K562 (cell line): ENCODE measurements at regions of chr20 and their contacts with region 1.

Region 1: DNA sequence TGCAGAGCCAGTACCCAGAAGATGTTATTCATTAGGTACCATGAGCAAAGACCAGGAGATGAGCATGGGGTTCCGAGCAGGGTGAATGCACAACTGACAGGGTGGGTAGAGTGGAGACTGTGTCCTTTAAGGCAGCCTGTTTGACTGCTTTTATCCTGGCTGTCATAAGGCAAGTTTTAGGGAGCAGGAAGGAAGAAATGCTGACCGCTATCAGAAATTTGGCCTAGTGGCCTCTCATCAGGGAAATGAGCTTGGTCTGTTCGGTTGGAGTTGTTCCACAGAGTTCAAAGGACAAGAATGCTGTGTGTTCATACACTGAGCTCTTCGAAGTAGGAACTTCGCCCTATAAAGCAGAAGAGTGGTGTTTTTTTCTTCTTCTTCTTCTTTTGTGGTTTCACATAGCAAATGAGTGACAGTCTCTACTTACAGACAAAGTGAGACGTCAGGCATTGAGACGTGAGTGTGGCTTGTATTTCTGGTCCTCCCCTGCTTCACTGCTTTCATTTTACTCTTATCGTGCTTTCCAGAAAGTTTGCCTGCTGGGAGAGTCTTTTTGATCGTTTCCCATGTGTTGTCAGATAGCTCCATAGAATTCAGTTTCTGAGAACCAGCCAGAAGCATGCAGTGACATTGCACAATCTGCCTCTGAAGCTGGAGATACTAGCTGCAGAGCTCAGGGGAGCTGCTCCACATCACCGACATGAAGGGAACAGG is at the start of gene CASS4:
- DNase-seq: peak; percentile 81 to 97 (median 85)
- ATAC-seq: peak; percentile 84
- H3K4me3 ChIP-seq: peak within 1 kb of the TSS; percentile 77
- H3K27ac ChIP-seq: peak within 1 kb of the TSS; percentile 85
- H3K4me1 ChIP-seq: peaks cover 9 to 52% of the 10 kb centered on the region in 2 experiments
- H3K27me3 ChIP-seq: no peaks in the 10 kb centered on the region
- CTCF ChIP-seq: no peak
- EP300 ChIP-seq: peak; percentile 99
- POLR2A ChIP-seq: no peak
- RAD21 ChIP-seq: peak in 1 of 2 experiments; percentile 30; a peak in 2 of 4 replicates
- polyA plus RNA-seq, gene CASS4: 8.1 to 8.8 TPM

Region 2: DNA sequence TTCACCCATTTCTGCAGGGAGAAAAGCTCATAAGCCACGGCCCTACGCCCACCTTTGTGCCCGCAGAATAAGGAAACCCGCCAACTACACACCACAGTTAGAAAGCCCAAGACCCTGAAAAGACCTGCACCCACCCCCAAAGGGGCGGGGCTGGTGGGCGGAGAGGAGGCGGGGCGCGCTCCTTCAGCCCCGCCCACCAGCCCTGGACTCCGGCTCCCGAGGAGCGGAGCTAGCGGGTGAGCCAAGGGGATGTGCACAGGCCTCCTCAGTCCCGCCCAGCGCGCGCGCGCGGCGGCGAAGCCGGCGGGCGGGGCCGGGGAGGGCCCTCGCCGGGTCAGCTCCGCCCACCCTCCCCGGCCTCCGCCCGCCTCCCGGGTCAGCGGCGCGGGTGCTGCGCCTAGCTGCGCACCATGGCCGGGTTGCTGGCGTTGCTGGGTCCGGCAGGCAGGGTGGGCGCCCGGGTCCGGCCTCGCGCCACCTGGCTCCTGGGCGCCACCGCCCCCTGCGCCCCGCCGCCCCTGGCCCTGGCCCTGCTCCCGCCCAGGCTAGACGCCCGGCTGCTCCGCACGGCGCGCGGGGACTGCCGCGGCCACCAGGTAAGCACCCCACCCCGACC is 53.2 kb before region 1 on chr20 and contains the start of gene FAM210B:
- CTCF ChIA-PET with region 1: no interaction called
- POLR2A ChIA-PET with region 1: interaction called, 8 read pairs
- in situ Hi-C with region 1: no loop called
- intact Hi-C with region 1: loop called (anchors 2 kb)
- DNase-seq: peak; percentile 94 to 97 (median 96)
- ATAC-seq: peak; percentile 87
- H3K4me3 ChIP-seq: peak within 1 kb of the TSS; percentile 81
- H3K27ac ChIP-seq: peak within 1 kb of the TSS; percentile 81
- H3K4me1 ChIP-seq: peaks cover 34 to 52% of the 10 kb centered on the region in 2 experiments
- H3K27me3 ChIP-seq: no peaks in the 10 kb centered on the region
- CTCF ChIP-seq: no peak
- EP300 ChIP-seq: no peak
- POLR2A ChIP-seq: no peak
- RAD21 ChIP-seq: no peak
- polyA plus RNA-seq, gene FAM210B: 12.1 to 21.4 TPM

Region 3: DNA sequence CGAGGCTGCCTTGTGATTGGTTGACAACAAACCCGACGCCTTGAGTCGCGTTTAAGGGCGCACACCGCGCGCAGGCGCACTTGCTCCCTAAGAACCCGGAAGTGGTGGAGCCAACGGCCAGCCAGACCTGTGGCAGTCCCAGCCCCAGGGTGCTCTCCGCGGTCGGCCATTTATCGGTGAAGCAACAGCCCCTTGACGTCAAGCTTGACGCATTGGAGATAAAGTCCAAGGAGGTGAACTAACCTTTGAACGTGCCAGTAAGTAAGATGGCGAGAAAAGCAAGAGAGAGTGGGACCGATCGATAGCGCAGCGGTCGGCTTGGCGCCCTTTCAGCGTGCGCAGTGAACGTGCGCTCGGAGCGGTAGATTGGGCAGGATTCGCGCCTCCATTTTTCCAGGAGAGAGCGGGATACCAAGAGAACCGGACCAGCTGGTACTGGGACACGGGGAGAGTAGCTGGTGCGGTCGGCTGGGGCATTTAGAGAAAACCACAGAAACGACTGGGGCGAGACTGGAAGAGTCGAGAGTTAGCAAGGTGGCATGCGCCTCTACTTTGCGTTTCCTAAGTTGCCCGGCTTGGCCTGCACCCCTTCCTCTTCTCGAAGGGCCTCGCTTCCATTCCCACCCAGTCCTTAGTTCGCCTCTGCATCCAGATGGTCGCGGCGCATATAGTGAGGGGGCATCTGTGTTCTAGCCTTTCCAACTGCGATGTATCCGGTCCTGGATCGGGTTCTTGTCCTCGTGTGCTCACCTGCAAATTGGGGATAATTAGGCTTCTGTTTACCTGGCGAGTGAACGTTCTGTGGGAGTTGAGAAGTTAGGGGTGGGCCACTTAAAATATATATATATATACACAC is 19.4 kb before region 1 on chr20 and contains the start of gene CSTF1:
- CTCF ChIA-PET with region 1: no interaction called
- POLR2A ChIA-PET with region 1: interaction called, 35 read pairs
- in situ Hi-C with region 1: no loop called
- intact Hi-C with region 1: loop called (anchors 1 kb)
- DNase-seq: peak; percentile 99 to 100 (median 100)
- ATAC-seq: peak; percentile 95
- H3K4me3 ChIP-seq: peak within 1 kb of the TSS; percentile 92
- H3K27ac ChIP-seq: peak within 1 kb of the TSS; percentile 99
- H3K4me1 ChIP-seq: peaks cover 4 to 12% of the 10 kb centered on the region in 2 experiments; a peak in 3 of 5 replicates
- H3K27me3 ChIP-seq: no peaks in the 10 kb centered on the region
- CTCF ChIP-seq: no peak
- EP300 ChIP-seq: peak; percentile 70
- POLR2A ChIP-seq: peak; percentile 77; the same call in 1 of the 2 replicates
- RAD21 ChIP-seq: no peak
- polyA plus RNA-seq, gene CSTF1: 74.1 to 110 TPM

Region 4: GRCh38 chr20:56422076-56422823 is 10.3 kb after region 1 on chr20:
- CTCF ChIA-PET with region 1: no interaction called
- POLR2A ChIA-PET with region 1: interaction called, 72 read pairs
- in situ Hi-C with region 1: no loop called
- intact Hi-C with region 1: no loop called
- DNase-seq: peak in 3 of 4 experiments; percentile 41 to 82 (median 60)
- ATAC-seq: peak; percentile 40
- H3K4me3 ChIP-seq: 0 out of 2 replicates have a peak overlapping the region, but pooled peaks have one; percentile 6
- H3K27ac ChIP-seq: peak overlapping the region; percentile 85
- H3K4me1 ChIP-seq: peaks cover 34 to 78% of the 10 kb centered on the region in 2 experiments
- H3K27me3 ChIP-seq: no peaks in the 10 kb centered on the region
- CTCF ChIP-seq: peak in 2 of 3 experiments; percentile 52 to 56; a peak in 4 of 6 replicates
- EP300 ChIP-seq: peak; percentile 67; the same call in 1 of the 2 replicates
- POLR2A ChIP-seq: no peak
- RAD21 ChIP-seq: peak in 1 of 2 experiments; percentile 53; a peak in 3 of 4 replicates

Region 5: DNA sequence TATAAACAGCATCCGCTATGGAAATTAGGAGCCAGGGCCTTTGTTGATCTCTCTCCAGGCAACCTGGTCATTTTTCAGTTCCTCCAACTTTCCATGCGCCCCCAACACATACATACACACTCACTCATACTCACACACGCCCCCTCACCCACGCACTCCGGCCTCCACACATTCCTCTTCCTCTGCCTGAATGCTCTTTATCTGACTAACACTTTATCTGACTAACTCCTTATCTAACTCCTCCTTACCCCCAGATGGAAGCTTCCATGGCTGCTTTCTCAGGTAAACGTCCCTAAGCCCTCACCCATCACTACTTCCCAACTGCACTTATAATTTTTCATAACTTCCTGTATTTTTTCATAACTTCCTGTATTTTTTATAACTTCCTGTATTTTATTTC is 17.6 kb after region 1 on chr20:
- CTCF ChIA-PET with region 1: no interaction called
- POLR2A ChIA-PET with region 1: interaction called, 72 read pairs
- in situ Hi-C with region 1: no loop called
- intact Hi-C with region 1: loop called (anchors 2 kb)
- DNase-seq: peak; percentile 64 to 80 (median 78)
- ATAC-seq: peak; percentile 46
- H3K4me3 ChIP-seq: no peak overlapping the region
- H3K27ac ChIP-seq: peak overlapping the region; percentile 50
- H3K4me1 ChIP-seq: peaks cover 26 to 57% of the 10 kb centered on the region in 2 experiments
- H3K27me3 ChIP-seq: no peaks in the 10 kb centered on the region
- CTCF ChIP-seq: no peak
- EP300 ChIP-seq: peak; percentile 82; the same call in 1 of the 2 replicates
- POLR2A ChIP-seq: no peak
- RAD21 ChIP-seq: no peak

Region 6: GRCh38 chr20:56468316-56469082 is 56.6 kb after region 1 on chr20 and contains the start of gene RTF2:
- CTCF ChIA-PET with region 1: no interaction called
- POLR2A ChIA-PET with region 1: interaction called, 4 read pairs
- in situ Hi-C with region 1: no loop called
- intact Hi-C with region 1: loop called (anchors 5 kb)
- DNase-seq: peak; percentile 93 to 98 (median 96)
- ATAC-seq: peak; percentile 99
- H3K4me3 ChIP-seq: peak within 1 kb of the TSS; percentile 88
- H3K27ac ChIP-seq: peak within 1 kb of the TSS; percentile 74
- H3K4me1 ChIP-seq: peaks cover 3 to 6% of the 10 kb centered on the region in 2 experiments; a peak in 4 of 5 replicates
- H3K27me3 ChIP-seq: no peaks in the 10 kb centered on the region
- CTCF ChIP-seq: no peak
- EP300 ChIP-seq: no peak
- POLR2A ChIP-seq: peak; percentile 86
- RAD21 ChIP-seq: no peak
- polyA plus RNA-seq, gene RTF2: 114 to 177 TPM

Region 7: GRCh38 chr20:56487216-56487615 is 75.3 kb after region 1 on chr20:
- CTCF ChIA-PET with region 1: no interaction called
- POLR2A ChIA-PET with region 1: no interaction called
- in situ Hi-C with region 1: no loop called
- intact Hi-C with region 1: no loop called
- DNase-seq: no peak
- ATAC-seq: no peak
- H3K4me3 ChIP-seq: no peak overlapping the region
- H3K27ac ChIP-seq: no peak overlapping the region
- H3K4me1 ChIP-seq: no peaks in the 10 kb centered on the region
- H3K27me3 ChIP-seq: no peaks in the 10 kb centered on the region
- CTCF ChIP-seq: no peak
- EP300 ChIP-seq: no peak
- POLR2A ChIP-seq: no peak
- RAD21 ChIP-seq: no peak

Region 8: DNA sequence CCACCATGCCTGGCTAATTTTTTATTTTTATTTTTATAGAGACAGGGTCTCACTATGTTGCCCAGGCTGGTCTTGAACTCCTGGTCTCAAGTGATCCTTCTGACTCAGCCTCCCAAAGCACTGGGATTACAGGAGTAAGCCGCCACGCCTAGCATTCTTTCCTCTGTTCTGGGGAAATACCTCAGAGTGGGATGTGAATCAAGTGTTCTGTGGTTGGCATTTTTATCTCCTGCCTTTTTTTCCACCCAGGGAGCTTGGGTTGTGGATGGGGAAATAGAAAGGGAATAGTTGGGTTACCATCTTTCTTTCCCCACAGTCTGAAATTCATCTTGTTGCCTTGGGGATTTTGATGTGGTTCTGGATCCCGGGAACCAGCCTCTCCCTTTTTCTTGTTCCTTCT is 241.3 kb after region 1 on chr20:
- CTCF ChIA-PET with region 1: no interaction called
- POLR2A ChIA-PET with region 1: no interaction called
- in situ Hi-C with region 1: no loop called
- intact Hi-C with region 1: no loop called
- DNase-seq: no peak
- ATAC-seq: no peak
- H3K4me3 ChIP-seq: no peak overlapping the region
- H3K27ac ChIP-seq: no peak overlapping the region
- H3K4me1 ChIP-seq: no peaks in the 10 kb centered on the region
- H3K27me3 ChIP-seq: peaks cover 4 to 15% of the 10 kb centered on the region in 2 experiments; a peak in 3 of 5 replicates
- CTCF ChIP-seq: no peak
- EP300 ChIP-seq: no peak
- POLR2A ChIP-seq: no peak
- RAD21 ChIP-seq: no peak